ENCODE measurements at regions of chr12 and their contacts with region 1.

Region 1: DNA sequence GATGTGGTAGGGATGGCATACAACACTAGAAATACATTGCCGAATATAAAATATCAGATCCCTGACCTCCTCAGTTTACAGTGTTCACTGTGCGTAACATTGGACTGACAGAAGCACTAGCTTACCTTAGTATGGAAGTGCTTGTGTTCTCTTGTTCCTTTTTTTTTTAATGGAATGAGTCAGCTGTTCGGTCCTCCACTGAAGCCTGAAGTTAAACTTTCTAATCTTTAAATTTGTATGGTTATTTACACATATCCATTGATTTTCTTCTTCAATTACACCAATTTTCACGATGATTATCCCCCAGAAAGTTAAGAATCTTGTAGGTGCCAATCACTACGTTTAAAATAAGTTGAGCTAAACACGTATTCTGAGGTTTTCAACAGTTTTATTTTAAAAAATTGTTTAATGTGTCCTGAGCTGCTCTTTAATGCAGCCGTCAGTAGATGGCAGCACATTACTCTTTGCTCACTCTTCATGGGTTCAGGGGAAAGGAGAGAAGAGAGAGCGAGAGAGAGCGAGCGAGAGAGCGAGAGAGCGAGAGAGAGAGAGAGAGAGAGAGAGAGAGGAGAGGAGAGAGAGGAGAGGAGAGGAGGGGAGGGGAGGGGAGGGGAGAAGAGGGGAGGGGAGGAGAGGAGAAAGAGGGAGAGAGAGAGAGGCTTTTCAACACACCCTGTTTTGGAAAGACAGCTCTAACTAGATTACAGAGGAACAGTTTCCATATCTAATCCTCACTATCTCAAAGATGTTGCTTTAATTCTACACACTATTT is 134.7 kb upstream of the SCAF11 start:
- DNase-seq: peak; percentile 36 to 60
- H3K4me3 ChIP-seq: 0 out of 2 replicates have a peak overlapping the region, but pooled peaks have one; percentile 35
- H3K27ac ChIP-seq: no peak overlapping the region
- H3K4me1 ChIP-seq: 0 out of 2 replicates have a peak, but pooled peaks cover 4% of the 10 kb centered on the region
- H3K27me3 ChIP-seq: no peaks in the 10 kb centered on the region
- CTCF ChIP-seq: peak; percentile 83

Region 2: DNA sequence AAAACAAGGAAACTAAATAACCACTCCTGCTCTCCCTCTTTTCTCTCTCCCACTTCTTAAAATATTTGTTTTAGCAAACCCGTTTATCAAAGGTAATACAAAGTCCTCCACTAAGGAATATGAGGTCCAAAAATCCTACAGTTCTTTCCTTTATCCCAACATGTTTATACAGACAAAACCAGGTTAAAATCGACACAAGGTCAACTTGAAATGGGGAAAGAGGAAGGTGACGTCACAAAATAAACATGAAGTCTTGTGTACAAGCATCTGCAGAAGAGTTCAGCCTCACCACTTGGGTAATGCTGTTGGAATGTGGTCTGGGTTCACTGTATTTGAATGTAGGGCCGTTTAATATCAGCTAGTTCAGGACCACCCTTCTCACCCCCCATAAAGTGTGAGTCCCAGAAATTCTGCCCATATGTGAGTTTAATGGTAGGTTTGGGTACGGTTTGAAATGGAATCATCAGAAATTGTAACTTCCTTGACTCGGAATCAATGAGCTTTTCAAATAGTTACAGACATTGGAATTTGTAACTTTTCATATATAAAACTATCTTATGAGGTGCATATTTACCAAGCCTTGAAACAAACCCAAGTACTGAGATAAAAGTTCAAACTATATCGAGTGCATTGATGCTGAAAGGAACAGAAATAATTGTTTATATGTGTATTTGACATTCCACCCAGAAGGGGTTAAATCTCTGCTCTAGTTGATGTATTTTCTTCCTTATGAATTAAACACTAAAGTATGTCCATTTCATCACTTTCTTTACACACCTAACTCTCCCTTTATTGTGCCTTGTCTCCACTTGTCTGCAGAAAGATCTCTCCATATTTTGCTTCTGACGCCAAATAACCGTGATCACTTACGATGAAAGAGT is 367.7 kb after region 1 on chr12:
- CTCF ChIA-PET with region 1: interaction called, 11 read pairs
- POLR2A ChIA-PET with region 1: no interaction called
- intact Hi-C with region 1: no loop called
- DNase-seq: peak; percentile 25 to 88
- H3K4me3 ChIP-seq: peak overlapping the region; percentile 3; the same call in 1 of the 2 replicates
- H3K27ac ChIP-seq: peak overlapping the region; percentile 81
- H3K4me1 ChIP-seq: peaks cover 47% of the 10 kb centered on the region
- H3K27me3 ChIP-seq: no peaks in the 10 kb centered on the region
- CTCF ChIP-seq: no peak

Region 3: GRCh38 chr12:46886541-46887041 is 761.6 kb after region 1 on chr12:
- CTCF ChIA-PET with region 1: interaction called, 10 read pairs
- POLR2A ChIA-PET with region 1: no interaction called
- intact Hi-C with region 1: no loop called
- DNase-seq: no peak
- H3K4me3 ChIP-seq: no peak overlapping the region
- H3K27ac ChIP-seq: no peak overlapping the region
- H3K4me1 ChIP-seq: no peaks in the 10 kb centered on the region
- H3K27me3 ChIP-seq: no peaks in the 10 kb centered on the region
- CTCF ChIP-seq: no peak

Region 4: GRCh38 chr12:46933947-46934346 is 808.9 kb after region 1 on chr12:
- CTCF ChIA-PET with region 1: interaction called, 3 read pairs
- POLR2A ChIA-PET with region 1: interaction called, 14 read pairs
- intact Hi-C with region 1: no loop called
- DNase-seq: peak in 1 of 2 experiments; percentile 7
- H3K4me3 ChIP-seq: no peak overlapping the region
- H3K27ac ChIP-seq: no peak overlapping the region
- H3K4me1 ChIP-seq: no peaks in the 10 kb centered on the region; the same call in 1 of the 2 replicates
- H3K27me3 ChIP-seq: no peaks in the 10 kb centered on the region
- CTCF ChIP-seq: peak; percentile 70

Region 5: DNA sequence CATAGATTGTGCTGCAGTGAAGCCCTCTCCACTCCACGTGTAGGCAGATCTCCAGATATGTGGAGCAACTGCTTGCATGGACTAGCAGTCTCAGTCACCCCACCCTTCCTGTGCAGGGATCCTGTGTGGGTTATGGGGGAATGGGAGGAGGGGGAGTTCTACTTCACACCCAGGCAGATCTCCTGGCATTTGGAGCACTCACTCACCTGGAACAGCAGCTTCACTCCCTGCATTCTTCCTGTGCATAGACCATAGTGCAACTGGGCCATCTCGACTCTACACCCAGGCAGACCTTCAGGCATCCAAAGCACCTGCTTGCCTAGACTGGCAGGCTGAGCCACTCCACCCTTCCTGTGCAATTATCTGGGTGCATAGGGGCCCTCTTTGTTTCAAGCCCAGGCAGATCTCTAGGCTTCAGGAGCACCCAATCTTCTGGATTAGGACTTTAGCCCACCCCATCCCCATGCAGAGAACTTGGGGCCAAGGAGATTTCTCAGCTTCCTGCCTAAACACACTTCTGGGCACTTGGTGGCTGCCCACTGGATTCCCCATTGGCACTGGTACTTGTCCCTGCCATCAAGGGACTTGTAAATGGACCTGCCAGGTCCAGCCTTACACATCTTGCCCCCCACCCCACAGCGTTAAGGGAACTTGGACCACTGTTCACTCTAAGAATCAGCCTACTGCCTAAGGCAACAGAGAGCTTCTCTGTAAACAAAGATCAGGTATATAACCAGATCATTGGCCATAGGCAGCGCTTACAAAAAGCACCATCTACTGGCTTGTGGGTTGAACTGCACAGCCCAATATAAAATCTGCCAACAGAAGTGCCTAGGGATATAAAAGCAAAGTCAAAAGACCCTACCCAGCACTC is 858.6 kb after region 1 on chr12:
- CTCF ChIA-PET with region 1: interaction called, 5 read pairs
- POLR2A ChIA-PET with region 1: interaction called, 11 read pairs
- intact Hi-C with region 1: no loop called
- DNase-seq: peak; percentile 44 to 62
- H3K4me3 ChIP-seq: no peak overlapping the region
- H3K27ac ChIP-seq: no peak overlapping the region
- H3K4me1 ChIP-seq: peaks cover 14% of the 10 kb centered on the region
- H3K27me3 ChIP-seq: no peaks in the 10 kb centered on the region
- CTCF ChIP-seq: peak; percentile 84

Region 6: GRCh38 chr12:47548401-47548800 is 1423.4 kb after region 1 on chr12:
- CTCF ChIA-PET with region 1: no interaction called
- POLR2A ChIA-PET with region 1: interaction called, 27 read pairs
- intact Hi-C with region 1: no loop called
- DNase-seq: no peak
- H3K4me3 ChIP-seq: no peak overlapping the region
- H3K27ac ChIP-seq: no peak overlapping the region
- H3K4me1 ChIP-seq: no peaks in the 10 kb centered on the region
- H3K27me3 ChIP-seq: no peaks in the 10 kb centered on the region
- CTCF ChIP-seq: no peak

Measured in PC-9 (cell line).